ENCODE measurements at regions of chr22 and their contacts with region 1.

Region 1: DNA sequence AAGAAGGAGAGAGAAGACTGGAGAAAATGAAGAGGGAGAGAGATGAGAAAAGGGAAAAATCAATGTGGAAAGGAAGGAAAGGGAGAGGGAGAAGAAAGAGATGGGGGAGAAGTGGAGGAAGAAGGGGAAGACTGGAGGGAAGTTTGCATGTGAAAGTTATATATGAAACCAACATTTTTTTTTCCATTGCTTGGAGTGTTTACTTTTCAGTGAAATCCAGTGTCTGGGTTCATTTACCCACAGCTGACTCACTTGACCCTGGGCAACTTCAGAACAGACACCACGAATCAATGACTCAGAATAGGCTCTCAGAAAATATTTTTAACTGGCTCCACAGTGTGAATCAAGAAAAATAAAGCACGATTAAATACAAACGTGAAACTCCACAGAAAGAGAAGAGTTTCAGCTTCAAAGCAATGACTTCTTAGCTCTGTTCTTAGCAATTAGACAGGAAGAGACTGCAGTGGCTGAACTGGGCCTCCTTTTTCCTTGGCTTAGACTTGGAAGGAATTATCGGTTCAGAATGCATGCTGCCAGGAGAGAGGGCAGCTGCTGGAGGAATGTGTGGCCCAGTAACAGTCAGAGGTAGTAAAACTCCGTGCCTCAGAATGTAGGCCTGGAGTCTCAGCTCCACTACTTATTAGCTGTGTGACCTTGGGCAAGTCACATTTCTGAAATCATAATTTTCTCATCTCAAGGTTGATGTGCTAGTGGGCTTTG is 237.5 kb downstream of the MIAT start:
- DNase-seq: no peak
- ATAC-seq: no peak
- H3K4me3 ChIP-seq: no peak overlapping the region
- H3K27ac ChIP-seq: no peak overlapping the region
- H3K4me1 ChIP-seq: no peaks in the 10 kb centered on the region
- H3K27me3 ChIP-seq: peaks cover 0 to 15% (median 13%) of the 10 kb centered on the region in 3 donors
- CTCF ChIP-seq: no peak
- POLR2A ChIP-seq: no peak

Region 2: GRCh38 chr22:26777156-26777801 is 117.6 kb before region 1 on chr22:
- in situ Hi-C with region 1: loop called in 1 of 4 experiments (anchors 25 kb)
- intact Hi-C with region 1: no loop called
- DNase-seq: peak; percentile 44 to 64
- ATAC-seq: peak; percentile 92 to 94
- H3K4me3 ChIP-seq: no peak overlapping the region
- H3K27ac ChIP-seq: peak overlapping the region; percentile 34 to 46 (median 40)
- H3K4me1 ChIP-seq: peaks cover 21 to 23% of the 10 kb centered on the region in 2 donors
- H3K27me3 ChIP-seq: no peaks in the 10 kb centered on the region
- CTCF ChIP-seq: no peak
- POLR2A ChIP-seq: no peak

Region 3: DNA sequence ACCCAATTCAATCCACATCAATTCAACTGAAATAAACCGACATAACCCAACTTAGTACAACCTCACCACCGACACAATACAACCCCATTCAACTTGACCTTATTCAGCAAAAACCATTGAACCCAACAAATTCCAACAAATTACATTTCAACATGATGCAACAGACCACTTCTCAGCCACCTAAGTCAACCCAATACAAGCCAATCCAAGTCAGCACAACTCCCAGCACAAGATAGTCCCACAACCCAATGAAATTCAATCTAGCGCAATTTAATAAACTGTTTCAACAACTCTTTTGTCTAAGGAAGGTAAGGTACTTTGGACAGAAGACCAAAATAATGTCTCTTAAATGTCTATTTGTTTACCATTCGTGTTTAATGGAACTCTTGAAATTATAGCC is 11.5 kb before region 1 on chr22:
- in situ Hi-C with region 1: no loop called
- intact Hi-C with region 1: no loop called
- DNase-seq: no peak
- ATAC-seq: no peak
- H3K4me3 ChIP-seq: no peak overlapping the region
- H3K27ac ChIP-seq: no peak overlapping the region
- H3K4me1 ChIP-seq: no peaks in the 10 kb centered on the region
- H3K27me3 ChIP-seq: no peaks in the 10 kb centered on the region
- CTCF ChIP-seq: no peak
- POLR2A ChIP-seq: no peak

Region 4: GRCh38 chr22:26953012-26953883 is 58.3 kb after region 1 on chr22:
- in situ Hi-C with region 1: loop called in 1 of 4 experiments (anchors 10 kb)
- intact Hi-C with region 1: no loop called
- DNase-seq: no peak
- ATAC-seq: no peak
- H3K4me3 ChIP-seq: no peak overlapping the region
- H3K27ac ChIP-seq: no peak overlapping the region
- H3K4me1 ChIP-seq: no peaks in the 10 kb centered on the region
- H3K27me3 ChIP-seq: peaks cover 18 to 31% (median 22%) of the 10 kb centered on the region in 3 donors
- CTCF ChIP-seq: no peak
- POLR2A ChIP-seq: no peak

Region 5: GRCh38 chr22:27115816-27116256 is 220.9 kb after region 1 on chr22:
- in situ Hi-C with region 1: no loop called
- intact Hi-C with region 1: no loop called
- DNase-seq: no peak
- ATAC-seq: no peak
- H3K4me3 ChIP-seq: no peak overlapping the region
- H3K27ac ChIP-seq: no peak overlapping the region
- H3K4me1 ChIP-seq: no peaks in the 10 kb centered on the region
- H3K27me3 ChIP-seq: peaks cover 0 to 8% (median 0%) of the 10 kb centered on the region in 3 donors
- CTCF ChIP-seq: no peak
- POLR2A ChIP-seq: no peak